Tibial artery (tissue), 4 donors: ENCODE measurements at regions of chr17 and their contacts with region 1.

Region 1: GRCh38 chr17:31558748-31559644 is 167.5 kb downstream of the RAB11FIP4 start:
- DNase-seq: peak; percentile 73 to 90
- H3K4me3 ChIP-seq: peak overlapping the region; percentile 74 to 76
- H3K27ac ChIP-seq: peak overlapping the region; percentile 95 to 97
- H3K4me1 ChIP-seq: peaks cover 0 to 42% (median 32%) of the 10 kb centered on the region in 4 donors
- H3K27me3 ChIP-seq: no peaks in the 10 kb centered on the region
- CTCF ChIP-seq: peak; percentile 87 to 97

Region 2: DNA sequence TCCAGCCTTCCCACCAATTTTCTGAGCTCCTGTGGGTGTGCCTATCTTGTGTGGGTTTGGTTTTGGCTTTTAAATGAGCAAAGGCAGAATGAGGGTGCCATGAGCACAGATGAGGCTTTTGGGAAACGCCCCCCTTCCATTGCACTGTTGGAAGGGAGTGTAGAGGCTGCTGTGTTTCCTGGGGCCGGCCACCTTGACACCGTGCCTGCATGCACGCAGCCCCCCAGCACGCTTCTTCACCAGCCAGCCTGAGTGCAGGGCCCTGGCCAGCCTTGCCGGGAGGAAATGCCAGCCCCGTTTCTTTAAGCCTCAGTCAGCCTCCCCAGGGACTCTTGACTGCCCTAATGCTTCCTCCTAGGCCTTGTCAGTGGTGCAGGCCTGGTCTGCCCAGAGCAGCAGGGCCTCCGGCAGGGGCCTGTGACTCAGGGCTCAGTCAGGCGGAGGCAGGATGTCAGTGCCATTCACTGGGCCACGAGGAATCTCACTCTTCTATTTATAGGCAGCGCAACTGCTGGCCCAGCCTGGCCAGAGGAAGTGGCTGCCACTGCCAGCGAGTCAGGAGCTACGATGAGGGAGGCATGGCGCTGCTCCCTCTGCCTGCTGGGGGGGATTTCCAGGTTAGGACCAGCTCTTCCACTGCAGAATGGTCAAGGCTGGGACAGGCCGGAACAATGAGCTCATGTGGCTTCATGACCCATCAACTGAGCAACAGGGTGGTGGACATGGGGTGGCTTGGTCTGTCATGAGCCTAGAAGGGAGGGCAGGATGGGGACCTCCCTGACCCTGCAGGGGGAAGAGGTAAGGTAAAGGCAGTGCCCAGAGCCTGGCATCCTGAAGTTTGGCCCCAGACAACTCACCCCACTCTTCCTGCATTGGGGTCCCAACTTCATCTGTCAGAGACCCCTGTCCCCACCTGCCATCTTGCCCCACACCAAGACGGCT is 37.7 kb after region 1 on chr17:
- intact Hi-C with region 1: loop called (anchors 5 kb)
- DNase-seq: peak; percentile 89 to 98
- H3K4me3 ChIP-seq: no peak overlapping the region
- H3K27ac ChIP-seq: peak overlapping the region; percentile 87 to 89
- H3K4me1 ChIP-seq: peaks cover 5 to 63% (median 52%) of the 10 kb centered on the region in 4 donors
- H3K27me3 ChIP-seq: no peaks in the 10 kb centered on the region
- CTCF ChIP-seq: peak; percentile 7 to 16

Region 3: GRCh38 chr17:31842183-31843069 is 283.4 kb after region 1 on chr17:
- intact Hi-C with region 1: loop called (anchors 5 kb)
- DNase-seq: peak; percentile 57 to 83
- H3K4me3 ChIP-seq: peak overlapping the region; percentile 23 to 40
- H3K27ac ChIP-seq: peak overlapping the region; percentile 76 to 80
- H3K4me1 ChIP-seq: peaks cover 0 to 64% (median 28%) of the 10 kb centered on the region in 4 donors
- H3K27me3 ChIP-seq: no peaks in the 10 kb centered on the region
- CTCF ChIP-seq: peak; percentile 98 to 99

Region 4: GRCh38 chr17:31858642-31859473 is 299.9 kb after region 1 on chr17 and contains the start of gene COPRS:
- intact Hi-C with region 1: loop called (anchors 5 kb)
- DNase-seq: peak; percentile 83 to 95
- H3K4me3 ChIP-seq: peak within 1 kb of the TSS; percentile 57 to 95
- H3K27ac ChIP-seq: peak within 1 kb of the TSS; percentile 73 to 94
- H3K4me1 ChIP-seq: peaks cover 0 to 30% (median 16%) of the 10 kb centered on the region in 4 donors
- H3K27me3 ChIP-seq: no peaks in the 10 kb centered on the region
- CTCF ChIP-seq: no peak